ENCODE measurements at regions of chr17 and their contacts with region 1.

Region 1: GRCh38 chr17:42345396-42346078 is 42.7 kb downstream of the STAT3 start:
- DNase-seq: no peak
- ATAC-seq: no peak
- H3K4me3 ChIP-seq: no peak overlapping the region
- H3K4me3 Mint-ChIP-seq: no peak overlapping the region
- H3K27ac ChIP-seq: no peak overlapping the region
- H3K27ac Mint-ChIP-seq: no peak overlapping the region
- H3K4me1 ChIP-seq: peaks cover 24% of the 10 kb centered on the region
- H3K4me1 Mint-ChIP-seq: peaks cover 47% of the 10 kb centered on the region
- H3K27me3 ChIP-seq: no peaks in the 10 kb centered on the region
- H3K27me3 Mint-ChIP-seq: no peaks in the 10 kb centered on the region
- CTCF ChIP-seq: no peak

Region 2: DNA sequence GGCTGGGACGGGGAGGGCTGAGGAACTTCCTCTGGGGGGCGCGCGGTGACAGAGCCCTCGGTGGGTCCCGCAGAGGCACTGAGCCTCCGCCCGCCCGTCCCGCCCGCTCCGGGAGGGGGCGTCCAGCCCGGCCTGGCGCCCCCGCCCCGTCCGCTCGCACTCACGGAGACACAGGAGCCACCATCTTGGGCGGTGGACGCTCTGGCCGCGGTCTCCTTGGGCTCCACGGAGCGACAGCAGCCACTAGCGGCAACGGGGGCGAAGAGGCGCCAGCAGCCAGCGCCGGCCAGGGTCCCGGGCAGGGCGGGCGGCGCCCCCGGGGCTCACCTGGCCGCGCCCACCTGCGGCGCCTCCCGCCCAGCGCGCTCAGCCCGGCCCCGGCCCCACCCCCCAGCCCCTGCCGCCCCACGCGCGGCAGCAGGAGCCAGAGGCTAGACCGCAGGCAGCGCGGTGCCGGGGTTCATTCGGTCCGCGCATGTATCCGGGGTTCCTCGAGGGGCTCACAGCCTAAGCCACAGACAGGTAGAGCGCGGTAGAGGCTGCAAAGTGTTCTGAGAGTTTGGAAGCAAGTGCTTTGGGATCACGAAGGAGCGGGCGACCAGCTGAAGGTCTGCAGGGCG is 295.0 kb before region 1 on chr17 and contains the start of gene C17orf113:
- CTCF ChIA-PET with region 1: no interaction called
- POLR2A ChIA-PET with region 1: no interaction called
- intact Hi-C with region 1: no loop called
- DNase-seq: peak; percentile 9 to 73 (median 36)
- ATAC-seq: peak; percentile 72
- H3K4me3 ChIP-seq: peak within 1 kb of the TSS; percentile 54
- H3K4me3 Mint-ChIP-seq: peak within 1 kb of the TSS; percentile 85
- H3K27ac ChIP-seq: no peak within 1 kb of the TSS
- H3K27ac Mint-ChIP-seq: no peak within 1 kb of the TSS
- H3K4me1 ChIP-seq: peaks cover 15% of the 10 kb centered on the region
- H3K4me1 Mint-ChIP-seq: peaks cover 17% of the 10 kb centered on the region
- H3K27me3 ChIP-seq: peaks cover 6 to 16% of the 10 kb centered on the region in 2 experiments
- H3K27me3 Mint-ChIP-seq: peaks cover 38% of the 10 kb centered on the region
- CTCF ChIP-seq: no peak
- total RNA-seq, gene C17orf113: 0.42 to 0.55 TPM

Region 3: GRCh38 chr17:42373896-42374295 is 28.4 kb after region 1 on chr17:
- CTCF ChIA-PET with region 1: no interaction called
- POLR2A ChIA-PET with region 1: no interaction called
- intact Hi-C with region 1: loop called in 1 of 2 experiments (anchors 1 kb)
- DNase-seq: no peak
- ATAC-seq: no peak
- H3K4me3 ChIP-seq: no peak overlapping the region
- H3K4me3 Mint-ChIP-seq: no peak overlapping the region
- H3K27ac ChIP-seq: no peak overlapping the region
- H3K27ac Mint-ChIP-seq: no peak overlapping the region
- H3K4me1 ChIP-seq: peaks cover 15% of the 10 kb centered on the region
- H3K4me1 Mint-ChIP-seq: peaks cover 49% of the 10 kb centered on the region
- H3K27me3 ChIP-seq: no peaks in the 10 kb centered on the region
- H3K27me3 Mint-ChIP-seq: no peaks in the 10 kb centered on the region
- CTCF ChIP-seq: no peak

Region 4: DNA sequence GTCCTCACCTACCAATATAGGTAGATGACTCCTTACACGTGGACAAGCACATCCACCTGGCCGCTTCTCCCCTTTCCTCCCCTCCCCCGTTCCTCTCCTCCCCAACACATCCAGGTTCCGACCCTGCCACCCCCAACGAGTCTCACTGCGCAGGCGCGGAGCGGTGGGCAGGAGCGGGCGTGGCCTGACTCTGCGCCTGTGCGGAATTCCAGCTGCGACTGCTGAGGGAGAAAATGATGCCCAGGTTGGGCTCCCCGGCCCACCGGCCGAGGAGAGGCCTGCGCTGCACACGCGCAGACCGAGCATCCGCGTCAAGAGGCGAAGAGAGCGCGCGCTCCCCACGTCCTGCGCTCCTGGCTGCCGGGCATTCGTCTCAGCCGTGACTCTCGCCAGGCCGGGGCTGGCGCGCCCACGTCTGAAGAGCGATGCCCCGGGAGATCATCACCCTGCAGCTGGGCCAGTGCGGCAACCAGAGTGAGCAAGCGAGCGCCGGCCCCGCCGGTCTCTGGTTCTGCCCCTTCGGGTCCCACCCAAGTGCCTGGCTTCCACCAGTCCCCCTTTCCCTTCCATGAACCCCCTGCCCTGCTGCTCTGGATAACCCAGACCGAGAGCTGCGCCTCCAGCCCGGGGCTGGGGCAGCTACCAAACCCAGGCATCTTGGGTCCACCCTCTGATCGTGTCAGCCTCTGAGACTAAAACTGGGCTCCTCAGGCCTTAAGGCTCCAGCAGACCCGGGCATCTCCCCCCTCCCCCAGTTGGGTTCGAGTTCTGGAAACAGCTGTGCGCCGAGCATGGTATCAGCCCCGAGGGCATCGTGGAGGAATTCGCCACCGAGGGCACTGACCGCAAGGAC is 313.8 kb after region 1 on chr17 and contains the start of gene TUBG2:
- CTCF ChIA-PET with region 1: no interaction called
- POLR2A ChIA-PET with region 1: no interaction called
- intact Hi-C with region 1: no loop called
- DNase-seq: peak in 12 of 14 experiments; percentile 49 to 85 (median 69)
- ATAC-seq: peak; percentile 78
- H3K4me3 ChIP-seq: peak within 1 kb of the TSS; percentile 70
- H3K4me3 Mint-ChIP-seq: peak within 1 kb of the TSS; percentile 89
- H3K27ac ChIP-seq: no peak within 1 kb of the TSS
- H3K27ac Mint-ChIP-seq: peak within 1 kb of the TSS; percentile 27
- H3K4me1 ChIP-seq: peaks cover 14% of the 10 kb centered on the region
- H3K4me1 Mint-ChIP-seq: peaks cover 21% of the 10 kb centered on the region
- H3K27me3 ChIP-seq: peaks cover 0 to 2% of the 10 kb centered on the region in 2 experiments
- H3K27me3 Mint-ChIP-seq: peaks cover 5% of the 10 kb centered on the region
- CTCF ChIP-seq: no peak
- total RNA-seq, gene TUBG2: 9.0 to 9.7 TPM